HepG2 (cell line): ENCODE measurements at regions of chr2 and their contacts with region 1.

Region 1: DNA sequence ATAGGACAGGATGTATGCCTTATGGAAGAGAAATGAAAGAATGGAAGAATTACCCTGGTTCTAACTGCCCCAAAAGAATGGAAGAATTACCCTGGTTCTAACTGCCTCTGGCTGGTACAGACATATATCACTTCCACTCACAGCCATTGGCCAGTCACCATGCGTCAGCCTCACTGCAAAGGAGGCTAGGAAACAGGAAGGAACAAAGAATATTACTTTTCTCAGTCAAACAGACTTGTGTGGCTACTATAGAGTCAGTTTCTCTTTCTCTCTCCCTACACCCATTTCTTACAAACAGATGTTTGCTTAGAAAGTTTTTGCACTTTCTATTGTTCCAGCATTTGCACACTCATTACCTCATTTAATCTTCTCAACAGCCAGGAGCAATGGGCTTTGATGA is 1111.1 kb upstream of the KLHL29 start:
- DNase-seq: no peak
- ATAC-seq: no peak
- H3K4me3 ChIP-seq: no peak overlapping the region
- H3K27ac ChIP-seq: no peak overlapping the region
- H3K4me1 ChIP-seq: no peaks in the 10 kb centered on the region
- H3K27me3 ChIP-seq: no peaks in the 10 kb centered on the region
- CTCF ChIP-seq: no peak
- EP300 ChIP-seq: no peak
- POLR2A ChIP-seq: no peak
- RAD21 ChIP-seq: no peak

Region 2: DNA sequence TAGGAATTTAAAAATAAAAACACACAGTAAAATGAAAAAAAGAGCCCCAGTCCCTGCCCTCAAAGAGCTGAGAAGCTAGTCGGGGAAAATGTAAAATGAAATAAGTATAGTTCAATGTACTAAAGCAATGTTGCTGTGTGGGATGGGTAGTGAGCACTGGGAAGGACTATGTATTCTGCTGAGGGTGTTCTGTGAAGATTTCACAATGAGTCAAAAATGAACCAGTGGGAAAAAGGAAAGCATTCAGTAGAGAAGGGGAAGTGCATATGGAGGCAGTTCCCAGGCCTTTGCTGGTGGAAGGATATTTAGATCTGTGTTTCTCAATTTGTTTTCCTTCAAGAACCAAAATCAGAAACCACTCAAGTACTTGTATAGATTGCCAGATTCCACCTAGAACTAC is 16.4 kb after region 1 on chr2:
- CTCF ChIA-PET with region 1: no interaction called
- POLR2A ChIA-PET with region 1: no interaction called
- in situ Hi-C with region 1: no loop called
- intact Hi-C with region 1: no loop called
- DNase-seq: no peak
- ATAC-seq: no peak
- H3K4me3 ChIP-seq: no peak overlapping the region
- H3K27ac ChIP-seq: no peak overlapping the region
- H3K4me1 ChIP-seq: no peaks in the 10 kb centered on the region
- H3K27me3 ChIP-seq: no peaks in the 10 kb centered on the region
- CTCF ChIP-seq: no peak
- EP300 ChIP-seq: no peak
- POLR2A ChIP-seq: no peak
- RAD21 ChIP-seq: no peak

Region 3: DNA sequence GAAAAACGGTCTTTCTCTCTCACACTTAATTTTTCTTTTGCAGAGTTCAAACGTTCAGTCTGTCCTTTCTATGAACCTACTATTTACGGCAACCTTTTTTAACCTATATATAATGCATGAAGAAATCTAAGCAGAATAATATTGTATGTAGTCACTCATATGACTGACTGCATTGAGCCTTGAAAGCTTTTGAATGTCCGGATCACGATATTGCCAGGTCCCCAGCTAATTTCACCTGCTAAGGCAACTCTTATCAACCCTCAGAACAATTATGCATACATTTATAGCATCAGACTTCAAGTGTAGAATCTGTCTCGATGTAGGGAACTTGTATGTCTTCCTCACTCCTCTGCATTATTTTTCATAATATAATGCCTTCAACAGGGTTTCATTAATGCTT is 27.4 kb after region 1 on chr2:
- CTCF ChIA-PET with region 1: no interaction called
- POLR2A ChIA-PET with region 1: no interaction called
- in situ Hi-C with region 1: no loop called
- intact Hi-C with region 1: loop called (anchors 1 kb)
- DNase-seq: no peak
- ATAC-seq: no peak
- H3K4me3 ChIP-seq: no peak overlapping the region
- H3K27ac ChIP-seq: no peak overlapping the region
- H3K4me1 ChIP-seq: no peaks in the 10 kb centered on the region
- H3K27me3 ChIP-seq: no peaks in the 10 kb centered on the region
- CTCF ChIP-seq: no peak
- EP300 ChIP-seq: no peak
- POLR2A ChIP-seq: no peak
- RAD21 ChIP-seq: no peak